Activated CD4-positive, alpha-beta T cell treated with anti-CD3 and anti-CD28 coated beads, Interleukin-2, amount 10 ng/mL, durations not matched to agents 7 days and 5 days (primary cell): ENCODE measurements at regions of chr12 and their contacts with region 1.

Region 1: GRCh38 chr12:68414988-68415387 is 82.8 kb upstream of the MDM1 start:
- DNase-seq: no peak
- H3K4me3 Mint-ChIP-seq: no peak overlapping the region
- H3K27ac Mint-ChIP-seq: no peak overlapping the region
- H3K4me1 Mint-ChIP-seq: peaks cover 15% of the 10 kb centered on the region
- H3K27me3 Mint-ChIP-seq: no peaks in the 10 kb centered on the region

Region 2: GRCh38 chr12:68403711-68404110 is 11.3 kb before region 1 on chr12:
- CTCF ChIA-PET with region 1: interaction called, 16 read pairs
- POLR2A ChIA-PET with region 1: no interaction called
- DNase-seq: no peak
- H3K4me3 Mint-ChIP-seq: no peak overlapping the region
- H3K27ac Mint-ChIP-seq: no peak overlapping the region
- H3K4me1 Mint-ChIP-seq: peaks cover 17% of the 10 kb centered on the region
- H3K27me3 Mint-ChIP-seq: peaks cover 4% of the 10 kb centered on the region